BJ (cell line): ENCODE measurements at regions of chr5 and their contacts with region 1.

Region 1: GRCh38 chr5:56950626-56951125 is 1.2 kb downstream of the MIER3 start:
- DNase-seq: no peak
- H3K4me3 ChIP-seq: peak overlapping the region; percentile 79
- H3K27me3 ChIP-seq: no peaks in the 10 kb centered on the region
- CTCF ChIP-seq: no peak

Region 2: GRCh38 chr5:56918054-56918453 is 32.6 kb before region 1 on chr5:
- CTCF ChIA-PET with region 1: no interaction called
- POLR2A ChIA-PET with region 1: no interaction called
- DNase-seq: no peak
- H3K4me3 ChIP-seq: no peak overlapping the region
- H3K27me3 ChIP-seq: no peaks in the 10 kb centered on the region
- CTCF ChIP-seq: no peak

Region 3: DNA sequence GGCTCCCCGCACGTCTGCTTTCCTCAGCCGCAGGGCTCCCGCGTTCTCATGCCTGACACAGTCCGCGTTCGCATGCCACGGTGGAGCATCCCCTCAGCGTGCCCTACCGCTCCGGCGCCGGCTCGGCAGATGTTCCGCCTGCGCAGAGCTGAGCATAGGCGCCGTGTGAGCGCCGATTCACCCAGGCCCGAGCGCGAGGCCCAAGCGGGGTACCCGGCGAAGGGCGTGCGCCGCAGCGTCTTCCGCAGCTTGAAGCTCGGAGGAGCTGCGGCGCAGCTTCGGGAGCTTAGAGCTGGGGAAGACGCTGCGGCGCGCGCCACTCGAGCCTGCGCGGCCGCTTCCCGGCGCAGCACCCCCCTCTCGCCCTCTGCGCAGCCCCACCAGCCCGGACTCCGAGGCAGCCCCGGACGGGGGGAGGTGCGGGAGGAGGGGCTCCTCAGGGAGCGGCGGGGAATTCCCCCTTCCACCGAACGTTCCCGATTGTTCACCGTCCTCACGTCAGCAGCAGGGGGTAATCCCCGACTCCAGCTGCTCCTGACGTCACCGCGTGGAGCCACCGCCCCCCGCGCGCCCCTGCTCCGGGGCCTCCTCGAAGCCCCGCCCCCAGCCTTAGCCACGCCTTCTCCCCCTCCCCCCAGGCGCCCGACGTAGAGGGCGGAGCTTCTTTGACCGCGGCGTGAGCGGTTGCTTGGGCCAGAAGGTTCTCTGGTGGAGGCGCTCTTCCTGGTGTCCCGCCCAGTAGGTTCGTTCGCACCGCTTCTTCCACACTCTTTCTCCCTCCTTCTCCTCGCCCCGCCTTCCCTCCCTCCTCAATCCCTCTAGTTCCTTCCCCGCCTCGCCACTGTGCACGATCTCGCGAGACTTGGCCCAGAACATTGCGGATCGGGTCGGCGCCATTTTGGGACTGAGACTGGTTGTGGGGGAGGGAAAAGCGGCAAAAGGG is 222.8 kb after region 1 on chr5 and contains the start of gene GPBP1:
- CTCF ChIA-PET with region 1: no interaction called
- POLR2A ChIA-PET with region 1: interaction called, 12 read pairs
- DNase-seq: peak; percentile 95
- H3K4me3 ChIP-seq: peak within 1 kb of the TSS; percentile 98
- H3K27me3 ChIP-seq: no peaks in the 10 kb centered on the region
- CTCF ChIP-seq: 0 out of 2 replicates have a peak, but pooled peaks have one; percentile 6
- polyA plus RNA-seq, gene GPBP1: 13.1 and 34.0 TPM in 2 replicates